HCT116 (cell line): ENCODE measurements at regions of chr14 and their contacts with region 1.

Region 1: DNA sequence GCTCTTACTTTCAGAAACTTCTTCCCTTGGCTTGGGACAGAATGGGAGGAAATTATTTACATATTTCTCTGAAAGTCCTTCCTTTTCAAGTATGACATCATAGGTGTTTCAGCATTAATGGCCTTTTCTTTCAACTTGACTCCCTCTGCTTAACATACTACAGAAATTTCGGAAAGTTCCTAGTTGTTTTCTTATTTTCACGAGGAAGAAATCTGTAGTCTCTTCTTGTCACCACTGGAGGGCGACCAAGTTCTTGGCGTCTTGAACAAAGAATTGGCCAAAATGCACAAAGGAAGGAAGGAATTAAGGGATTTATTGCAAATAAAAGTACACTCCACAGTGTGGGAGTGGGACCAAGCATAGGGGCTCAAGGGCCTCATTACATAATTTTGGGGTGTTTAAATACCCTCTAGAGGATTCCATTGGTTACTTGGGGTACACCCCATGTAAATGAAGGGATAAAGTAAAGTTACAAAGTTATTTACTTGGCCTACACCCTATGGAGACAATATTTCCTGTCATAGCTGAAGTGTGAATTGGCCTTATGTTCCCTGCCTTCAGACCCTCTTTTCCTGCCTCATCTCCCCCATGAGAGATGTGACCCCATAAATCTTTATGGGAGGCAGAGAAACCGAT is 70.4 kb downstream of the RPL10L start:
- DNase-seq: peak; percentile 31
- ATAC-seq: no peak
- H3K4me3 ChIP-seq: no peak overlapping the region
- H3K27ac ChIP-seq: no peak overlapping the region
- H3K4me1 ChIP-seq: no peaks in the 10 kb centered on the region
- H3K27me3 ChIP-seq: no peaks in the 10 kb centered on the region
- CTCF ChIP-seq: peak; percentile 36 to 71 (median 51); a peak in 5 of 6 replicates
- POLR2A ChIP-seq: no peak
- RAD21 ChIP-seq: peak; percentile 58

Region 2: DNA sequence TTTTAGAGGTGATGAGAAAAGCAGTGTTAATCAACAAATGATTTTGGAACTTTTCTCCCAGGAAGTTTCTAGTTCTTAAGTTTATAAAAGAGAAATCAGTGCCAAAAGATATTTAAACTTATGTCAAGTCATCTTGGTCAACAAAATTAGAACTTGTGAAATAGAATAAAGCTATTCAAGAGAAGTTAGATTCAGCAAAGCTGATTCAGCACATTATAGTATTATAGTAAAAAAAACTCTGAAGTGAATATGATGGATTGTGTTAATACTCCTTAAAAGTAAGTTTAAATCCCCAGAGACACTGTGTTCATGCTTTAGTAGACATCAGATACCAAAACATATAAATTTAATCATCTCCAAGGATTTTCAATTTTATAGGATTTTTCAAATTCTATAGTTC is 280.6 kb after region 1 on chr14:
- CTCF ChIA-PET with region 1: no interaction called
- POLR2A ChIA-PET with region 1: no interaction called
- RAD21 ChIA-PET with region 1: no interaction called
- intact Hi-C with region 1: no loop called
- DNase-seq: no peak
- ATAC-seq: no peak
- H3K4me3 ChIP-seq: no peak overlapping the region
- H3K27ac ChIP-seq: no peak overlapping the region
- H3K4me1 ChIP-seq: no peaks in the 10 kb centered on the region
- H3K27me3 ChIP-seq: no peaks in the 10 kb centered on the region
- CTCF ChIP-seq: no peak
- POLR2A ChIP-seq: no peak
- RAD21 ChIP-seq: no peak

Region 3: GRCh38 chr14:46940611-46941010 is 359.5 kb after region 1 on chr14:
- CTCF ChIA-PET with region 1: no interaction called
- POLR2A ChIA-PET with region 1: no interaction called
- RAD21 ChIA-PET with region 1: no interaction called
- intact Hi-C with region 1: loop called (anchors 10 kb)
- DNase-seq: no peak
- ATAC-seq: no peak
- H3K4me3 ChIP-seq: no peak overlapping the region
- H3K27ac ChIP-seq: no peak overlapping the region
- H3K4me1 ChIP-seq: no peaks in the 10 kb centered on the region
- H3K27me3 ChIP-seq: no peaks in the 10 kb centered on the region
- CTCF ChIP-seq: no peak
- POLR2A ChIP-seq: no peak
- RAD21 ChIP-seq: no peak